Vagina (tissue), 2 donors: ENCODE measurements at regions of chr9 and their contacts with region 1.

Region 1: GRCh38 chr9:136790927-136791641 is at the start of gene TMEM141:
- DNase-seq: peak; percentile 100
- H3K4me3 ChIP-seq: peak within 1 kb of the TSS; percentile 78 to 79
- H3K27ac ChIP-seq: peak within 1 kb of the TSS; percentile 97
- H3K4me1 ChIP-seq: peaks cover 26% of the 10 kb centered on the region
- H3K27me3 ChIP-seq: no peaks in the 10 kb centered on the region
- CTCF ChIP-seq: no peak
- POLR2A ChIP-seq: peak in 1 of 2 donors; percentile 79
- total RNA-seq, gene TMEM141: 64.1 TPM

Region 2: DNA sequence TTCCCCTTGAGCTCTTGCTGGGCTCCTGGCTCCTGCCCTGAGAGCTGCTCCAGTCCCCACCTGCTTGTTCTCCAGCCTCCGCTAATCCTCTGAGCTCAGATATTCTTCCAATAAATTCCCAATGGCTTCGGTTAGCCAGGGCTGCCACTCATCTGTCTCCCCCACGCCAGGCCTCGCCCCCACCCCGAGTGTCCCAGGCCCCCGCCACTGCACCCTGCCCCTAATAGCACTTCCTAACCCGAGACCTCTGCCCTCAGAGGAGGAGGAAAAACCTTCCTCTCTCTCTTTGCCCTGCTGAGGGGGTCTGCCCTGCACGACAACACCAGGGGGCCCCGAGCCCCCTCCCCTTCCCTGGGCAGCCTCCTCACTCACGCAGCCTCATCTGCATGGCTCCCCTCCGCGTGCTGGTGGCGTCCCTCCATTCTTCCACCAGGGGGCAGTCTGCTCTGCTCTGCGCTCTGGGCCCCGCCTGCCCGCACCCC is 21.3 kb before region 1 on chr9:
- intact Hi-C with region 1: no loop called
- DNase-seq: no peak
- H3K4me3 ChIP-seq: no peak overlapping the region
- H3K27ac ChIP-seq: no peak overlapping the region
- H3K4me1 ChIP-seq: no peaks in the 10 kb centered on the region
- H3K27me3 ChIP-seq: no peaks in the 10 kb centered on the region
- CTCF ChIP-seq: no peak
- POLR2A ChIP-seq: no peak

Region 3: DNA sequence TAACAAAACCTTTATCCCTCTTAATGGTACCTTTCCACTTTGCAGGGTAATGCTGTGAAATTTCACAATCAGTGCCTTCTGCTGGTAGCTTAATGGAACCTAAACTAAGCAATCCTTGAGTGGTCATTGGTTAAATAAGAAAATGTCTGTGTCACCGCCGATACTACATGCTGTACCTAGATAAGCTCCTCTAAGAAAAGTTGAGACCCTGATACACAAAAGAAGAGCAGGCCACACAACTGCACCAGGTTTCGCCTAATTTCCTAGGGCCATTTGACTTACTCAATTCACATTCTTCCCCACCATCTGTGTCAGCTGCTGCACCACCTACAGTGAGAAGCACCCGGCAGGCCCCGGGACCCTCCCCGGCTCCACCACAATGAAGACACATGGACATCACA is 84.1 kb after region 1 on chr9:
- intact Hi-C with region 1: no loop called
- DNase-seq: no peak
- H3K4me3 ChIP-seq: no peak overlapping the region
- H3K27ac ChIP-seq: no peak overlapping the region
- H3K4me1 ChIP-seq: no peaks in the 10 kb centered on the region
- H3K27me3 ChIP-seq: no peaks in the 10 kb centered on the region
- CTCF ChIP-seq: no peak
- POLR2A ChIP-seq: no peak

Region 4: DNA sequence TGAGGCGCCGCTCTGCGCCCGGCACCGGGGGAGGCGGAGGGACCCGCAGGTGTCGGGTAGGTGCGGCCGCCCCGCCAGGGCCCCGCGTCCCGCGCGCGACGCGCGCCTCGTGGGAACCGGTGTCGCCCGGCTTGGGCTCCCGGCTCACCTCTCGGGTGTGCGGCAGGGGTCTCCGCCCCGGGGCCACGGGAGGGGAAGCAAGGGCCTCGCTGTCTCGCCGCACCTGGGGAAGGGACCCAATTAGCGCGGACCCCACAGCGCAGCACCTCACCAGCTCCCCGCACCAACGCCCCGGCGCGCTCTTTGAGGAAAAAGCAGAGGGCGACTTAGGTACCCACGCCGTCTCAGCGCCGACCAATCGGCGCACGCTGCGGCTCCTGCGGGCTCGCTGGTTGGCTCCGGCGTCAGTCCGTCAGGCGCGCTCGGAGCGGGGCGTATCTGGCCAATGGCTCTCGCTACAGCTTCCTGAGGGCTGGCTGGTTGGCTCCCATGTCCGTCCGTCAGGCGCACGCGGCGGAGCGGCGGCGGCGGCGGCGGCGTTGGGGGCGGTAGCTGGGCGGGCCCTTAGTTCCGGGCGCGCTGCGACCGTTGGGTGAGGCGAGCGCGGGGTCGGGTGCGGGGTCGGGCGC is 95.0 kb after region 1 on chr9 and contains the start of gene TRAF2:
- intact Hi-C with region 1: loop called (anchors 2 kb)
- DNase-seq: peak in 1 of 2 donors; percentile 97
- H3K4me3 ChIP-seq: peak within 1 kb of the TSS; percentile 94 to 97
- H3K27ac ChIP-seq: peak within 1 kb of the TSS; percentile 88
- H3K4me1 ChIP-seq: peaks cover 41% of the 10 kb centered on the region
- H3K27me3 ChIP-seq: no peaks in the 10 kb centered on the region
- CTCF ChIP-seq: no peak
- POLR2A ChIP-seq: peak; percentile 4 to 39
- total RNA-seq, gene TRAF2: 12.8 TPM

Region 5: DNA sequence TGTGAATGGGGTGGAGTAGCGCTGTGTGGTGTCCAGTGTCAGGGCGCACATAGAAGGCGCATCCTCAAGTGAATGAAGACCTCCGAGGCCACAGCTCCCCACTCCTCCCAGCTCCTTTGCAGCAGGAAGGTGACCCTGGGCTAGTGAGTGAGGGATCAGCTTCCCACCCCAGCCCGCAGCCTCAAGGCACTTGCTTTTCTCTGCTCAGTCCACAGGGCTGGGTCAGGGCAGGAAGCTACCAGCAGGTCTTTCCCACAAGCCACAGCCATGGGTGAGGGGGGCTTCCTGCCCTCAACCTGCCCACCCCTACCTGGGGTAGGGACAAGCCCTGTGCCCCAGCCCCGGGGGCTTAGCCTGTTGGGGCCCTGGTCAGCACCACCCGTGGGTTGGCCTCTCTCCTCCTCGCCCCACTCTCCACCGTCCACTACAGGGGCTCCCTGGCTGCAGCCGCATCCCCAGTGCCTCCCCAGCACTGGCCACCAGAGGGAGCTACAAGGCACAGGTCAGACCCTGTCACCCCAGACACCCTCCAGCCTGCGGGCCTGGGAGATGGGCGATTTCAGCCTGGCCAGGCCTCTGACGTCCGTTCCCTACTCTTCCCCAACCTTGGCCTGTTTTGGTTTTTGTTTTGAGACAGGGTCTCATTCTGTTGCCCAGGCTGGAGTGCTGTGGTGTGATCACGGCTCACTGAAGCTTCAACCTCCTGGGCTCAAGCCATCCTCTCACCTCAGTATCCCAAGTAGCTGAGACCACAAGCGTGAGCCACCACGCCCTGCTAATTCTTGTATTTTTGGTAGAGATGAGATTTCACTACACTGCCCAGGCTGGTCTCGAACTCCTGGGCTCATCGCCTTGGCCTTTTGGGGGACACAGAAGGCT is 238.2 kb after region 1 on chr9:
- intact Hi-C with region 1: loop called (anchors 2 kb)
- DNase-seq: no peak
- H3K4me3 ChIP-seq: peak overlapping the region; percentile 67 to 76
- H3K27ac ChIP-seq: peak overlapping the region; percentile 77
- H3K4me1 ChIP-seq: peaks cover 40% of the 10 kb centered on the region
- H3K27me3 ChIP-seq: no peaks in the 10 kb centered on the region
- CTCF ChIP-seq: peak; percentile 69 to 75 (median 75)
- POLR2A ChIP-seq: no peak